Natural killer cell (primary cell): ENCODE measurements at regions of chr12 and their contacts with region 1.

Region 1: GRCh38 chr12:100200463-100201181 is at the start of gene ACTR6:
- DNase-seq: peak; percentile 97 to 99
- ATAC-seq: peak; percentile 86 to 94 (median 88)
- H3K4me3 ChIP-seq: peak within 1 kb of the TSS; percentile 81
- H3K4me3 Mint-ChIP-seq: peak within 1 kb of the TSS; percentile 99
- H3K27ac ChIP-seq: peak within 1 kb of the TSS; percentile 84
- H3K27ac Mint-ChIP-seq: peak within 1 kb of the TSS; percentile 98
- H3K4me1 ChIP-seq: peaks cover 28% of the 10 kb centered on the region
- H3K4me1 Mint-ChIP-seq: peaks cover 32 to 36% of the 10 kb centered on the region in 2 donors
- H3K27me3 ChIP-seq: no peaks in the 10 kb centered on the region
- H3K27me3 Mint-ChIP-seq: no peaks in the 10 kb centered on the region
- CTCF ChIP-seq: no peak
- total RNA-seq, gene ACTR6: 20.4 to 27.5 (median 20.8) TPM

Region 2: DNA sequence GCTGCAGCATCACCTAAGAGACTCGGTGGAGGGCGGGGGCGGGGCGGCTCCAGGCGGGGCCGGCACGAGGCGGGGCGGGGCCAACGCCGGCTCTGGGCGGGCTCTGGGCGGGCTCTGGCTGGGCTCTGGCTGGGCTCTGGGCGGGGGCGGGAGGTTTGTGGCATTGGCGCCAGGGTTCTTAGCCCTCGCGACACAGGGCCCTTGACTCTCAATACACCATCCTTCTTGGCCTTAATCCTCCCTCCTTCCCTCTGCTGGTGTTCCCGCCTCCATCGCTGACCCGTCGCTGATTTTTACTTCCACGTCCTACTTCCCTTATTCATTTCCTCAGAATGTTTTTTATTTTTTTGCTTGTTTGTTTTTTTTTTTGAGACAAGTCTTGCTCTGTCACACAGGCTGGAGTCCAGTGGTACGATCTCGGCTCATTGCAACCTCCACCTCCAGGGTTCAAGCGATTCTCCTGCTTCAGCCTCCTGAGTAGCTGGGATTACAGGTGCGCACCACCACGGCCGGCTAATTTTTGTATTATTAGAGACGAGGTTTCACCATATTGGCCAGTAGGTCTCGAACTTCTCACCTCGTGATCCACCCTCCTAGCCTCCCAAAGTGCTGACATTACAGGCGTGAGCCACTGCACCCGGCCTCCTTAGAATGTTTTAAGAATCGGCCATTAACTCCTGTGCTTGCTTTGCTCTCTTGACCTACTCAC is 57.6 kb before region 1 on chr12 and contains the start of gene BLTP3B:
- intact Hi-C with region 1: loop called (anchors 1 kb)
- DNase-seq: peak; percentile 85 to 92
- ATAC-seq: peak; percentile 93 to 99 (median 95)
- H3K4me3 ChIP-seq: peak within 1 kb of the TSS; percentile 81
- H3K4me3 Mint-ChIP-seq: peak within 1 kb of the TSS; percentile 98
- H3K27ac ChIP-seq: peak within 1 kb of the TSS; percentile 92
- H3K27ac Mint-ChIP-seq: peak within 1 kb of the TSS; percentile 91 to 95
- H3K4me1 ChIP-seq: peaks cover 16% of the 10 kb centered on the region
- H3K4me1 Mint-ChIP-seq: peaks cover 38 to 39% of the 10 kb centered on the region in 2 donors
- H3K27me3 ChIP-seq: no peaks in the 10 kb centered on the region
- H3K27me3 Mint-ChIP-seq: no peaks in the 10 kb centered on the region
- CTCF ChIP-seq: no peak
- total RNA-seq, gene BLTP3B: 30.8 to 42.8 (median 30.9) TPM

Region 3: GRCh38 chr12:100163416-100164152 is 37.0 kb before region 1 on chr12:
- intact Hi-C with region 1: loop called (anchors 5 kb)
- DNase-seq: peak; percentile 34 to 81
- ATAC-seq: peak; percentile 95 to 100 (median 100)
- H3K4me3 ChIP-seq: peak overlapping the region; percentile 1
- H3K4me3 Mint-ChIP-seq: peak overlapping the region; percentile 56
- H3K27ac ChIP-seq: no peak overlapping the region
- H3K27ac Mint-ChIP-seq: no peak overlapping the region
- H3K4me1 ChIP-seq: peaks cover 8% of the 10 kb centered on the region
- H3K4me1 Mint-ChIP-seq: peaks cover 11 to 12% of the 10 kb centered on the region in 2 donors
- H3K27me3 ChIP-seq: no peaks in the 10 kb centered on the region
- H3K27me3 Mint-ChIP-seq: no peaks in the 10 kb centered on the region
- CTCF ChIP-seq: peak; percentile 19

Region 4: DNA sequence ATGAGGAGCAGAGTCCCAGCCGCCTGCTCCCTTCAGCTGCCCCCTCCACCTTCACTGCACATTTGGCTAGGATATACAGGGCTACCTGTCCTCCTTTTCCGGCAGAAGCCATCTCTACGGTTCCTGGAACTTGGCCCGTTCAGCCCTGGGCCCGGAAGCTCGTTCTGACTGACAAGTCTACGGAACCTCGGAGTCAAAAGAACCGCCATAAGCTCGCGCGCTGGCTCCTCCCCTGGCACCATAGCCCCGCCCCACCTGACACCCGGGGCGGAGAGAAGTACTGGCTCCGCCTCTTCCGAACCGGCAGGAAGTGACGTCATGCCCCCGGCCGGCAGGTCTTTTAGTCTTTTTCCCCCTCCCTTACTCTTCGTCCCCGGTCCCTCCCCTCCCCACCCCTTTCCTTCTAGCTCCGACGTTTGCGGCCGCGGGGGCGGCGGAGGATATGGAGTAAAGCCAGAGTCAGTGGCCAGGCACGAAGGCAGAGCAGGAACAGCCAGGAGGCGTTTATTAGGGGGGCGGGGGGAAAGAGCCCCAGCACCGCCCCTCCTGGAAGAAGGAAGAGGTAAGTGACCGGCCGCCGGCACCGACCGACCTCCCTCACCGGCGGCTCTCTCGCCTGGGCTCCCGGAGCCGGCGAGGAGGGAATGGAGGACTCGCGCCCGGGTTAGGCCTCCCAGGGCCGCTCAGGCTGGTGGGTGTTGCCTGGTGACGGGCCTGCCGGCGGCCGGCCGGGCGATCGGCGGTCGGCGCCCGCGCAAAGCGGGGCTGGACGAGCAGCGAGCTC is 66.4 kb after region 1 on chr12 and contains the starts of genes DEPDC4 and SCYL2:
- intact Hi-C with region 1: loop called (anchors 1 kb)
- DNase-seq: peak; percentile 94 to 96
- ATAC-seq: peak; percentile 91 to 97 (median 91)
- H3K4me3 ChIP-seq: peak within 1 kb of the TSS; percentile 94
- H3K4me3 Mint-ChIP-seq: peak within 1 kb of the TSS; percentile 99
- H3K27ac ChIP-seq: peak within 1 kb of the TSS; percentile 97
- H3K27ac Mint-ChIP-seq: peak within 1 kb of the TSS; percentile 96 to 97
- H3K4me1 ChIP-seq: peaks cover 12% of the 10 kb centered on the region
- H3K4me1 Mint-ChIP-seq: peaks cover 25 to 44% of the 10 kb centered on the region in 2 donors
- H3K27me3 ChIP-seq: no peaks in the 10 kb centered on the region
- H3K27me3 Mint-ChIP-seq: no peaks in the 10 kb centered on the region
- CTCF ChIP-seq: no peak
- total RNA-seq, gene DEPDC4: 0.16 TPM in 1 of 3 donors, not detected in the others
- total RNA-seq, gene SCYL2: 48.7 to 61.0 (median 56.1) TPM